Ovary (tissue), 10 donors: ENCODE measurements at regions of chrX and their contacts with region 1.

Region 1: GRCh38 chrX:20969002-20969401 is 405.2 kb upstream of the CNKSR2 start:
- DNase-seq: no peak
- H3K4me3 ChIP-seq: no peak overlapping the region
- H3K27ac ChIP-seq: no peak overlapping the region
- H3K4me1 ChIP-seq: no peaks in the 10 kb centered on the region
- H3K27me3 ChIP-seq: no peaks in the 10 kb centered on the region
- CTCF ChIP-seq: no peak
- EP300 ChIP-seq: no peak
- POLR2A ChIP-seq: no peak

Region 2: GRCh38 chrX:19698125-19698524 is 1270.9 kb before region 1 on chrX:
- intact Hi-C with region 1: loop called in 1 of 4 experiments (anchors 5 kb)
- DNase-seq: peak in 1 of 5 donors; percentile 43
- H3K4me3 ChIP-seq: no peak overlapping the region
- H3K27ac ChIP-seq: no peak overlapping the region
- H3K4me1 ChIP-seq: peaks cover 5% of the 10 kb centered on the region
- H3K27me3 ChIP-seq: no peaks in the 10 kb centered on the region
- CTCF ChIP-seq: no peak
- EP300 ChIP-seq: no peak
- POLR2A ChIP-seq: no peak

Region 3: DNA sequence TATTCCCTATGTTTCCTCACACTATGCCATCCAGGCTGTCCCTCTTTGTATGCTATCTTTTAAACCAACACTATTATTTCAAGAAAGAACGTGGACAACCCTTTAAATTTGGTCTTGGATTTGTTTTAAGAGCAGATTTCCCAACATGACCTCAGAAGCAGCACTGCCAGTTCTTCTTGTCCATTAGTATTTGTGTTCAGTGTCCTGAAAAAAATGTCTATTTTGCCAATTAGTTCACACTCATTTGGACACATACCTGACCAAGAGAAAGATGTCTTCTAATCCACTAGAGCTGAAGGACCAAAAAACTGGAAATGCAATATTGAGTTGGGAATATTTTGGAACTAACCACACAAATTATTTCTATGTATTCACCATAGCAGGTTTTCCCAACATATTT is 182.0 kb after region 1 on chrX:
- intact Hi-C with region 1: no loop called
- DNase-seq: no peak
- H3K4me3 ChIP-seq: no peak overlapping the region
- H3K27ac ChIP-seq: no peak overlapping the region
- H3K4me1 ChIP-seq: no peaks in the 10 kb centered on the region
- H3K27me3 ChIP-seq: no peaks in the 10 kb centered on the region
- CTCF ChIP-seq: no peak
- EP300 ChIP-seq: no peak
- POLR2A ChIP-seq: no peak